ENCODE measurements at regions of chrX and their contacts with region 1.

Region 1: GRCh38 chrX:71216485-71216884 is 6.5 kb upstream of the GJB1 start:
- DNase-seq: peak; percentile 9
- H3K4me3 Mint-ChIP-seq: peak overlapping the region; percentile 75
- H3K27ac Mint-ChIP-seq: peak overlapping the region; percentile 35
- H3K4me1 Mint-ChIP-seq: peaks cover 50% of the 10 kb centered on the region
- H3K27me3 Mint-ChIP-seq: no peaks in the 10 kb centered on the region
- CTCF ChIP-seq: no peak

Region 2: GRCh38 chrX:71184803-71185505 is 31.5 kb before region 1 on chrX:
- CTCF ChIA-PET with region 1: interaction called, 4 read pairs
- intact Hi-C with region 1: loop called (anchors 2 kb)
- DNase-seq: peak; percentile 30
- H3K4me3 Mint-ChIP-seq: no peak overlapping the region
- H3K27ac Mint-ChIP-seq: no peak overlapping the region
- H3K4me1 Mint-ChIP-seq: peaks cover 8% of the 10 kb centered on the region
- H3K27me3 Mint-ChIP-seq: no peaks in the 10 kb centered on the region
- CTCF ChIP-seq: no peak

Region 3: DNA sequence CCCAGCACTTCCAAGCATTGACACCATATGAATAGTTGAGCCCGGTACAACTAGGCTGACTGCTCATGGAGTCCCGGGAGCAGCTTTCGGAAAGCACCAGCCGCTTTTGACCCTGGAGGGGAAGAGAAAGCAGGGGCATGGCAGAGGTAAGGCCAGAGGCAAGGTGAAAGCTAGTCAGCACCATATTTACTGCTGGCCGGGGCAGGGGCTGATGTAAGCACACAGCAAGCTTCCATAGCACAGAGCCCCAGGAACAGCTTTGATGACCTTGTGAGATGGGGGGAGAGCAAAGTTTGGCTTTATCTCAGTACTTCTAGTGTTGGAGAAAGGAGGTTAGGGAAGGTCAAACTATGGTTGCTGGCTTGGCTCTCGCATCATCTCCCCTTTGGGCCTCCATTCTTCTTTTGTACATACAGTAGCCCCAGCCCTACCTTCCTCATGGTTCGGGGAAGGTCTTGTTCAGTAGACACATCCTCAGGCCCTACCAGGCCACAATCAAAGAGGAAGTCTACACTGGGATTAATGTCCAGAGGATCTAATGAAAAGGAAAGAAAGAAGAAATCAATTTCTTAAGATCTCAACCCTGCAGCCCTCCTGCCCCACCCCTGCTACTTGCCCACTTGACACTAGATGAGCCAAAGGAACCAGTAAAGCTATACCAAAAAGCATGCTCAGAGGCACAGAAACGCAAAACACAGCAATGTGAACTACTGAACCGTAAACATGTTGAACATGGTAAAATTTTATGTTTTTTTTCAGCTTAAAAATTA is 28.1 kb after region 1 on chrX:
- CTCF ChIA-PET with region 1: interaction called, 12 read pairs
- intact Hi-C with region 1: no loop called
- DNase-seq: no peak
- H3K4me3 Mint-ChIP-seq: no peak overlapping the region
- H3K27ac Mint-ChIP-seq: no peak overlapping the region
- H3K4me1 Mint-ChIP-seq: no peaks in the 10 kb centered on the region
- H3K27me3 Mint-ChIP-seq: no peaks in the 10 kb centered on the region
- CTCF ChIP-seq: no peak

Region 4: DNA sequence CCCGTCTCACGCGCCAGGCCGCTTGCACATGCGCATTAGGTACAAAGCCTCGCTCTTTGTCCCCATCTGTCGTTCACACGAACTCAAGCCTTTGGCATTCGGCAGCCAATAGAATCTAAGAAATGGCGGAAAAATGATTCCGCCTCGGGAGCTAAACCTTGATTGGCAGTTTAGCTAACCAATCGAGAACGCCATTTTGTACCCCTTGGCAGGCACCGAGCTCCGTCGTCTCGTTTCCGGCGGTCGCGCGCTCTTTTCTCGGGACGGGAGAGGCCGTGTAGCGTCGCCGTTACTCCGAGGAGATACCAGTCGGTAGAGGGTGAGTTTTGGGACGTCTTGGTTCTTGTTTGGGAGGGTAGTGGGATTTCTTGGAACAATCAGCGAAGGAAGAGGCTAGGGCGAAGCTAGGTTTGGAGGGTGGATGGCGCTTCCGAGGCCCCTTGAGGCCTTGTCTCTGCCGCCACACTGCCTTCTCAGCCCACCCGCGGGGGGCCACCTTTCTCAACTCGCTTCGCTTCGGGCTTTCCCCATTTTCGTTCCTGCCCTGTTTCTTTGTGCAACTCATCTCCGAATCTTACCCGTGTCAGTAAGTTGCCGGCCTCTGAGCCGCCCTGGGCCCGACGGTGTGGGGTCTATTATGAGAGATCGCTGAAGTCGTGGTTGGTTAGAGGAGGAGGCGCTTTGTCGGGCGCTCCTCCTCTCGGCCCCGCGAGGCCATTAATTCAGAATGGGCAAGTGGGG is 67.1 kb after region 1 on chrX and contains the start of gene NONO:
- CTCF ChIA-PET with region 1: interaction called, 7 read pairs
- intact Hi-C with region 1: loop called (anchors 2 kb)
- DNase-seq: peak; percentile 90
- H3K4me3 Mint-ChIP-seq: peak within 1 kb of the TSS; percentile 97
- H3K27ac Mint-ChIP-seq: peak within 1 kb of the TSS; percentile 100
- H3K4me1 Mint-ChIP-seq: no peaks in the 10 kb centered on the region
- H3K27me3 Mint-ChIP-seq: peaks cover 10% of the 10 kb centered on the region
- CTCF ChIP-seq: no peak
- total RNA-seq, gene NONO: 520 and 576 TPM in 2 replicates

Region 5: GRCh38 chrX:71365876-71366673 is 149.6 kb after region 1 on chrX and contains the start of gene TAF1:
- CTCF ChIA-PET with region 1: interaction called, 3 read pairs
- intact Hi-C with region 1: loop called (anchors 10 kb)
- DNase-seq: peak; percentile 91
- H3K4me3 Mint-ChIP-seq: peak within 1 kb of the TSS; percentile 98
- H3K27ac Mint-ChIP-seq: peak within 1 kb of the TSS; percentile 97
- H3K4me1 Mint-ChIP-seq: peaks cover 20% of the 10 kb centered on the region
- H3K27me3 Mint-ChIP-seq: no peaks in the 10 kb centered on the region
- CTCF ChIP-seq: no peak
- total RNA-seq, gene TAF1: 50.3 and 54.9 TPM in 2 replicates

Measured in Calu3 (cell line).